Lower leg skin (tissue), 4 donors: ENCODE measurements at regions of chr2 and their contacts with region 1.

Region 1: DNA sequence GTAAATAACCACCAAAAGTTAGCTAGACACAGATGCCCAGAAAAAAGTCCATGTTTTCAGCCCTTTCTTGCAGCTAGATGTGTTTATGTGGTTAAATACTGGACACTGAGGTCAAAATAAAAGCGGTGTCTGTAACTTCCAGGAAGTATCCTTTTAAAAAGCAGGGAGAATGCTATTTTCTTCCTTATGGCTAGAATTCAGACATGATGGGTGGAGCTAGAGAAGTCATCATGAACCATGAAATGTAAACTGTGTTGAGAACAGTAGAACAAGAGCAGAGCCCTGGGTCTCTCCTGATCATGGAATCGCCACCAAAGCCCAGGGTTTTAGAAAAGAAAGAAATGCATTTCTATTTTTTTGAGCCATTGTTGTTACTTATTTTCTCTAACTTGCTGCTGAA is 41.3 kb upstream of the GALNT3 start:
- DNase-seq: no peak
- H3K4me3 ChIP-seq: no peak overlapping the region
- CTCF ChIP-seq: no peak
- POLR2A ChIP-seq: no peak

Region 2: DNA sequence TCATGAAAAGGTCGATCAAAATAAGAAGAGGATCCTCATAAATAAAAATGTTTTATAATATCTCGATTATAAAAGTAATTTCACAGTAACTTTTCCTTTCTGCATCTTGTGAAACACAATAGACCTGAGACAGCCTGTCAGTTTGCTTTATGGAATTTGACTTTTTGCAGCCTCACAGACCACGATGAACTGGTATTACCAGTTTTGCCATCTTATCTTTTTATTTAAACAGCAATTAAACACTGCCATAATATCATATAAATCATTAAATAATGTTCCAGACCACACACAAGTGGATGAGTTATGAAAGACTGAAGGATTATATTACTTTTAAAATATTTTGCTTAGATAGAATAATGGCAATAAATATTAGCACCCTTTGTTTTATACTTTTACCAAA is 30.6 kb before region 1 on chr2:
- intact Hi-C with region 1: no loop called
- DNase-seq: no peak
- H3K4me3 ChIP-seq: no peak overlapping the region
- CTCF ChIP-seq: no peak
- POLR2A ChIP-seq: no peak

Region 3: GRCh38 chr2:165874445-165875039 is 39.2 kb after region 1 on chr2:
- intact Hi-C with region 1: no loop called
- DNase-seq: no peak
- H3K4me3 ChIP-seq: no peak overlapping the region
- CTCF ChIP-seq: no peak
- POLR2A ChIP-seq: no peak

Region 4: DNA sequence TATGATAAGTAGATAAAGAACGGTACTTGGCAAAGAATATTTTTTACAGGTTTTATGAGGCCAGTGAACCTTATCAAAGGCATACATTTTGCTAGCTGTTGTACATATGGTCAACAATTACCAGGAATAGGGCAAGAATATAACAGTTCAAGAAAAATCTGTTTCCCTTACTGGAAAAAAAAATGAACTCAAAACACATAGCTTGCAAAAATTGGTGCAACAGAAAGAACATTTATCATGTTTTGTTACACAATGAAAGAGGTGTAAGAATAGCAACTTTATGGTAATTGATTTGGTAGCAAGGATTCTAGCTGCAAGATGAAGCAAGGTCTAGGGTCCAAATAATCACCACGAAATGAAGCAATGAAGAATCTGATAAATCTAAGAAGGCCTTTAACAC is 76.6 kb after region 1 on chr2:
- intact Hi-C with region 1: loop called (anchors 2 kb)
- DNase-seq: no peak
- H3K4me3 ChIP-seq: no peak overlapping the region
- CTCF ChIP-seq: no peak
- POLR2A ChIP-seq: no peak